IMR-90 (cell line): ENCODE measurements at regions of chr5 and their contacts with region 1.

Region 1: GRCh38 chr5:150209020-150209635 is 19.3 kb downstream of the SLC6A7 start:
- DNase-seq: peak; percentile 76
- ATAC-seq: peak; percentile 47
- H3K4me3 ChIP-seq: no peak overlapping the region
- H3K27ac ChIP-seq: no peak overlapping the region
- H3K4me1 ChIP-seq: peaks cover 11% of the 10 kb centered on the region
- H3K27me3 ChIP-seq: no peaks in the 10 kb centered on the region
- CTCF ChIP-seq: no peak
- POLR2A ChIP-seq: no peak
- RAD21 ChIP-seq: no peak

Region 2: DNA sequence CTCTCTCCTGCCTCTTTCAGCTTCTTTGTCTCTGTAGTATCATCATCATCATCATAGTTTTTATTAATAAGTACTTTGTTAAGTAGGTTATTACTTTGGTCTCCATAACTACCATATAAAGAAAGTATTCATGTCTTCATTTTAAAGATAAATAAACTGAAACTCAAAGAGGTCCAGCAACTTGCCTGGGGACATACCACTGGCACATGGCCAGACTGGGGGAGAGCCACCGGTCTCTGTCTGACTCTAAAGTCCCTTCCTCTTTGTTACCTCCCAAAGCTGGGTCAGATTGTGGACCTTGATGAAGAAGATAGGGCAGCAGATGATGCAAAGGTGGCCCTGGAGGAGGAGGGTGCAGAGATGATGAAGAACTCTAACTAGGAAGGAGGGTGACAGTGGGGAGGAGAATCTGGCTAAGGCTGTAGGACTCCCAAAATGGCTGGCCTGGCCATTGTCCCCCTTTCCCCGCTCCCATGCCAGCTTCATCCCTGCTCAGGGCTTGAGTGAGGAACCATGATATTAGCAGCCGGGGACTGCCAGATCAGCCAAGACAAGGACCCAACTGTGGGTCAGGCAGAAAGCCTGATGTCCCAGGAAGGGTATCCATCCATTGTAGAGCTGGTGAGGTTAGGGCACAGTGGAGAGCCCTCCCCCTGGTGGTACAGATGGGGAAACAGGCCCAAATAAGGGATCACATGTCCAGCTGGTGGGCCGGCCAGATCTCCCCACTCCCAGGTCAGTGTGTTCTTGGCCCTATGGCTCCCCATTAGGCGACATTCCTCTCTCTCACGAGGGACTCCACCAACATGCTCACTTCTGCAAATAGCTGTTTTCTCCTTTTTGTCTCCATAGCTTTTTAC is 33.8 kb before region 1 on chr5:
- CTCF ChIA-PET with region 1: interaction called, 5 read pairs
- POLR2A ChIA-PET with region 1: no interaction called
- dilution Hi-C with region 1: no loop called
- in situ Hi-C with region 1: loop called (anchors 5 kb)
- intact Hi-C with region 1: no loop called
- DNase-seq: peak; percentile 25
- ATAC-seq: peak; percentile 48; the same call in 1 of the 2 replicates
- H3K4me3 ChIP-seq: no peak overlapping the region
- H3K27ac ChIP-seq: no peak overlapping the region
- H3K4me1 ChIP-seq: peaks cover 10% of the 10 kb centered on the region
- H3K27me3 ChIP-seq: peaks cover 11% of the 10 kb centered on the region
- CTCF ChIP-seq: peak; percentile 51
- POLR2A ChIP-seq: no peak
- RAD21 ChIP-seq: peak; percentile 32

Region 3: DNA sequence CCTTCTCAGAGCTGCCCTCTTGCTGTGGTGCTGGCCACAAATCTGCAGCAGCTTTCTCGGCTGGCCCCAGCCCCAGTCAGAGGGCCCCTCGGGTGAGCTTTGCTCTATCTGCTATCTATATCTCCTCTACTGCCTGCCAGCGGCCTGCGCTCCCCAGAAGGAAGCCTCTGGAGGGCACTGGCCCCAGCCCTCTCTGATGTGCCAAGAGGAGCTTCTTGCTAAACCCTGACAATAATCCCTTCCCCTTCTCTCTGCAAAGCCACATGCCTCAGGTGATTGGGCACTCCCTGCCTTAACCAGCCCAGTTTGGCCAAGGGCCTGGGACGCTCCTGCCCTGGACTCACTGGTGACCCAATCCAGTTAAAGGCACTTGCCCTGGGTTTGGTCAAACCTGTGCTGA is 37.7 kb after region 1 on chr5:
- CTCF ChIA-PET with region 1: no interaction called
- POLR2A ChIA-PET with region 1: no interaction called
- dilution Hi-C with region 1: no loop called
- in situ Hi-C with region 1: no loop called
- intact Hi-C with region 1: no loop called
- DNase-seq: no peak
- ATAC-seq: no peak
- H3K4me3 ChIP-seq: no peak overlapping the region
- H3K27ac ChIP-seq: no peak overlapping the region
- H3K4me1 ChIP-seq: peaks cover 8% of the 10 kb centered on the region; the same call in 1 of the 2 replicates
- H3K27me3 ChIP-seq: peaks cover 6% of the 10 kb centered on the region
- CTCF ChIP-seq: no peak
- POLR2A ChIP-seq: no peak
- RAD21 ChIP-seq: no peak

Region 4: GRCh38 chr5:150258130-150258529 is 49.0 kb after region 1 on chr5:
- CTCF ChIA-PET with region 1: no interaction called
- POLR2A ChIA-PET with region 1: no interaction called
- dilution Hi-C with region 1: no loop called
- in situ Hi-C with region 1: no loop called
- intact Hi-C with region 1: no loop called
- DNase-seq: peak; percentile 36
- ATAC-seq: no peak
- H3K4me3 ChIP-seq: no peak overlapping the region
- H3K27ac ChIP-seq: no peak overlapping the region
- H3K4me1 ChIP-seq: peaks cover 9% of the 10 kb centered on the region
- H3K27me3 ChIP-seq: no peaks in the 10 kb centered on the region
- CTCF ChIP-seq: no peak
- POLR2A ChIP-seq: no peak
- RAD21 ChIP-seq: no peak